ENCODE measurements at regions of chr1 and their contacts with region 1.

Region 1: DNA sequence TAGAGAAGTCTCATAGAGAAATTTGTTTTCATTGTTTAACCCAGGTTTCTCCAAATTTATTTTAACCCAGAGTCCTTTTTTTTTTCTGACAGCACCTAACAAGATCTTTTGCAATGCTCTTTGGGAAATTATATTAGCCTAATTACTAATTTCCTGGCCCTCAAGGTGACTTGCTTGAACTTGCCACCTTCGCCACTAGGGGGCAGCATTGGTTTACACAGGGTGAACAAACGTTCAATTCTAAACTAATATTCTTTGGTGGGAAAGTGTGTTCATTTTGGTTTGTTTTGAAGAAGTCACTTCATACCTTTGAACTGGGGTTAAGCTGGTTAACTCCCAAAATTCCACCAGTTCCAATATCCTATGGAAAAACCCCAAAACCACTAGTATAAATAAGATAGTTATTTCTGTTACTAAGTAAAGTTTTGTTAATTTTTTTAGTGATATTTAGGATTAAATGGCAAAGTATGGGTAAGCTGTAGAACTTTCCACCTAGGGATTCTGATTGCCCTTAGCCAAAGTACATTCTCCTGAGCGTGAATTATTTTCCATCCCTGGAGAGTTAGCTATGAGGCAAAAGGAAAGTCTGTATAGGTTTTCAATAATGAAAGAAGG is 13.0 kb downstream of the CCDC190 start:
- DNase-seq: peak; percentile 86
- ATAC-seq: peak; percentile 47
- H3K4me3 Mint-ChIP-seq: no peak overlapping the region
- H3K27ac Mint-ChIP-seq: no peak overlapping the region
- H3K4me1 Mint-ChIP-seq: no peaks in the 10 kb centered on the region
- H3K27me3 Mint-ChIP-seq: no peaks in the 10 kb centered on the region; the same call in 1 of the 2 replicates
- CTCF ChIP-seq: peak; percentile 80; the same call in 1 of the 2 replicates

Region 2: GRCh38 chr1:162373541-162374375 is 474.2 kb before region 1 on chr1:
- CTCF ChIA-PET with region 1: no interaction called
- POLR2A ChIA-PET with region 1: no interaction called
- DNase-seq: no peak
- ATAC-seq: no peak
- H3K4me3 Mint-ChIP-seq: no peak overlapping the region
- H3K27ac Mint-ChIP-seq: no peak overlapping the region
- H3K4me1 Mint-ChIP-seq: no peaks in the 10 kb centered on the region
- H3K27me3 Mint-ChIP-seq: no peaks in the 10 kb centered on the region
- CTCF ChIP-seq: no peak

Region 3: GRCh38 chr1:162779043-162779442 is 68.9 kb before region 1 on chr1:
- CTCF ChIA-PET with region 1: no interaction called
- POLR2A ChIA-PET with region 1: no interaction called
- DNase-seq: no peak
- ATAC-seq: no peak
- H3K4me3 Mint-ChIP-seq: no peak overlapping the region
- H3K27ac Mint-ChIP-seq: no peak overlapping the region
- H3K4me1 Mint-ChIP-seq: peaks cover 6% of the 10 kb centered on the region
- H3K27me3 Mint-ChIP-seq: no peaks in the 10 kb centered on the region
- CTCF ChIP-seq: no peak

Region 4: GRCh38 chr1:162861101-162861500 is 13.2 kb after region 1 on chr1 and contains the start of gene CCDC190:
- CTCF ChIA-PET with region 1: interaction called, 12 read pairs
- POLR2A ChIA-PET with region 1: no interaction called
- DNase-seq: no peak
- ATAC-seq: peak; percentile 83
- H3K4me3 Mint-ChIP-seq: no peak within 1 kb of the TSS
- H3K27ac Mint-ChIP-seq: no peak within 1 kb of the TSS
- H3K4me1 Mint-ChIP-seq: no peaks in the 10 kb centered on the region; the same call in 1 of the 2 replicates
- H3K27me3 Mint-ChIP-seq: no peaks in the 10 kb centered on the region
- CTCF ChIP-seq: no peak
- total RNA-seq, gene CCDC190: not detected in 3 replicates

Region 5: GRCh38 chr1:162987866-162988265 is 139.9 kb after region 1 on chr1:
- CTCF ChIA-PET with region 1: no interaction called
- POLR2A ChIA-PET with region 1: no interaction called
- DNase-seq: no peak
- ATAC-seq: no peak
- H3K4me3 Mint-ChIP-seq: no peak overlapping the region
- H3K27ac Mint-ChIP-seq: no peak overlapping the region
- H3K4me1 Mint-ChIP-seq: peaks cover 18% of the 10 kb centered on the region
- H3K27me3 Mint-ChIP-seq: no peaks in the 10 kb centered on the region
- CTCF ChIP-seq: no peak

Measured in WTC11 (cell line).